Mammary epithelial cell (primary cell): ENCODE measurements at regions of chr9 and their contacts with region 1.

Region 1: DNA sequence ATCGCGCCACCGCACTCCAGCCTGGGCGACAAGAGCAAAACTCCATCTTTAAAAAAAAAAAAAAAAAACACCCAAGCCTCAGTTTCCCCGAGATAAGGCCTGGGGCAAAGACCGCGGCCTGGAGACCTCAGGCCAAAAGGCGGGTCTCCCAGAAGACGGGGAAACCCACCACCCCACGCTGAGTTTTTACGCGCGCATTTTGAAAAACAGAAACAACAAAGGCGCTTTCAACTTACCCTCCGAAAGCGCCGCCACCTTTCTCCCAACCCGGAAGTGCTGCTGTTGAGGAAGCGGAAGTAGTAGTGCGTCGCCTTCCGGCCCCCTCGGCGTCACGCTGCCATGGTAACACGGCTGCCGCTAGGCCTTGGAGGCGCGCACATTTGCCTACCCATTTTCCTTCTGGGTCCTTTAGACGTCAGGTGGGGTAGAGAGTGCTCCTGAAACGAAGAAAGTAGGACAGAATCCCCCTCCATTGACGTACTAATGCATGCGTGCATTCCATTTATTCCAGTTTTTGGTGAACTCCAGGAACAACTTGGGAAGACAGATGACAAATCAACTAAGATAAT is at the start of gene TTF1:
- DNase-seq: peak; percentile 79
- H3K4me3 ChIP-seq: peak within 1 kb of the TSS; percentile 46 to 77 (median 71)
- H3K27ac ChIP-seq: peak within 1 kb of the TSS; percentile 64
- H3K4me1 ChIP-seq: peaks cover 25% of the 10 kb centered on the region
- H3K27me3 ChIP-seq: no peaks in the 10 kb centered on the region
- CTCF ChIP-seq: no peak
- total RNA-seq, gene TTF1: 7.5 to 11.4 TPM

Region 2: GRCh38 chr9:132502480-132502879 is 95.8 kb after region 1 on chr9:
- CTCF ChIA-PET with region 1: no interaction called
- dilution Hi-C with region 1: loop called (anchors 5 kb)
- in situ Hi-C with region 1: no loop called
- intact Hi-C with region 1: no loop called
- DNase-seq: no peak
- H3K4me3 ChIP-seq: no peak overlapping the region
- H3K27ac ChIP-seq: no peak overlapping the region
- H3K4me1 ChIP-seq: no peaks in the 10 kb centered on the region
- H3K27me3 ChIP-seq: peaks cover 3% of the 10 kb centered on the region
- CTCF ChIP-seq: no peak

Region 3: GRCh38 chr9:132631303-132632084 is 224.9 kb after region 1 on chr9:
- CTCF ChIA-PET with region 1: no interaction called
- dilution Hi-C with region 1: no loop called
- in situ Hi-C with region 1: no loop called
- intact Hi-C with region 1: loop called (anchors 5 kb)
- DNase-seq: peak; percentile 94
- H3K4me3 ChIP-seq: peak overlapping the region in 1 of 3 experiments; percentile 33
- H3K27ac ChIP-seq: peak overlapping the region; percentile 86
- H3K4me1 ChIP-seq: peaks cover 35% of the 10 kb centered on the region
- H3K27me3 ChIP-seq: no peaks in the 10 kb centered on the region
- CTCF ChIP-seq: peak; percentile 12 to 33

Region 4: GRCh38 chr9:132800038-132800648 is 393.5 kb after region 1 on chr9:
- CTCF ChIA-PET with region 1: no interaction called
- dilution Hi-C with region 1: no loop called
- in situ Hi-C with region 1: no loop called
- intact Hi-C with region 1: loop called (anchors 1 kb)
- DNase-seq: peak; percentile 57
- H3K4me3 ChIP-seq: no peak overlapping the region
- H3K27ac ChIP-seq: no peak overlapping the region
- H3K4me1 ChIP-seq: no peaks in the 10 kb centered on the region
- H3K27me3 ChIP-seq: no peaks in the 10 kb centered on the region
- CTCF ChIP-seq: peak; percentile 78 to 85

Region 5: DNA sequence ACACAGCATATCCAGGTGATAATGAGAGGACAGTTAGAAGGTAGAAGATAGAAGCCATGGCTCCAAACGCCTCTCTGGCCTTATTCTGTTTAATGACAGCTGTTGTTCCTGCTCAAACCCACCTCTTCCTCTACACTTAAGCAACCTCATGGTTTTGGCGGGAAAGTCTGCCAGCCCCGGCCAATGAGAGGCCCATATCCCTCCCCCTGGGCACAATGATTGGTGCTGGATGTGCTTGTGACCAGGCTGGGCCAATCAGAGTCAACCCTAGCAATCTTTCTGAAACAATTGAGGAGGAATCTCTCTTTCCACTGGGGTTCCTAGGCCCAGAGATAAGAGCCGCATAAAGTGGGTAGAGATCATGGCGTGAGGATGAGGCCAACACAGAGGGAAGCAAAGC is 567.1 kb after region 1 on chr9:
- CTCF ChIA-PET with region 1: no interaction called
- dilution Hi-C with region 1: no loop called
- in situ Hi-C with region 1: no loop called
- intact Hi-C with region 1: loop called (anchors 1 kb)
- DNase-seq: no peak
- H3K4me3 ChIP-seq: no peak overlapping the region
- H3K27ac ChIP-seq: no peak overlapping the region
- H3K4me1 ChIP-seq: peaks cover 4% of the 10 kb centered on the region
- H3K27me3 ChIP-seq: peaks cover 2% of the 10 kb centered on the region
- CTCF ChIP-seq: no peak